ENCODE measurements at regions of chr10 and their contacts with region 1.

Region 1: GRCh38 chr10:62199584-62199983 is 69.1 kb downstream of the RTKN2 start:
- DNase-seq: no peak
- H3K4me3 Mint-ChIP-seq: no peak overlapping the region
- H3K27ac Mint-ChIP-seq: peak overlapping the region; percentile 24
- H3K4me1 Mint-ChIP-seq: peaks cover 36% of the 10 kb centered on the region
- H3K27me3 Mint-ChIP-seq: no peaks in the 10 kb centered on the region

Region 2: DNA sequence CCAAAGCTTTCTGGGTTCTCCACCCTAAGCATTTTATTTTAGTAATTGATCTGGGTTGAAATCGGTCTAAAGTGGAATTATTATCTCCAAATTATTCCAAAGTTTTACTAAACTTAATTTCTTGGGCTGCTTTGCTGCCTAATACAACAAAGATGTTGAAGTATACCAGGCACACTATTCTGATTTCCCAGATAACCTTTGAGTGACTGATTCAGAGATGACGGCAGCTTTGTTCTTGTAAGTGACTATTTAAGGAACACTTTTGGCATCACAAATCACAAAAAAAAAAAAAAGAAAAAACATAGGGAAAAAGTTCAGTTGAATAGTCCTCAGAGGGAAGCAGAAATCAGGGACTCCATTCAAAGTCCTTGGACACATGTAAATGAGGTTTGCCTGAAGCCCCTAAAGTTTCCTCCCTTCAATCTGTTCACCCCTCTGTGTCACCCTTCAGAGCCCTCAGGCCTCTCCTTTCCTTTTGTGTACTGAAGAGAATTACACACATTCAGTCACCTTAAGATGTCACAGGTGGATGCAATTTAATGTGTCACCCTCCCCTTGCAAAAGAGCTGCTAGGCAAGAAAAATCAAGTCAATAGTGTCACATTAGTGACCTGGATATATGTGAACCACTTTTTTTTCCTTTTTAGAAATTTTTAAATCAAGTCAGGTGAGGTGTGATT is 12.4 kb before region 1 on chr10:
- CTCF ChIA-PET with region 1: interaction called, 12 read pairs
- DNase-seq: no peak
- H3K4me3 Mint-ChIP-seq: no peak overlapping the region
- H3K27ac Mint-ChIP-seq: peak overlapping the region; percentile 97
- H3K4me1 Mint-ChIP-seq: peaks cover 65% of the 10 kb centered on the region
- H3K27me3 Mint-ChIP-seq: no peaks in the 10 kb centered on the region